CD4-positive, alpha-beta memory T cell (primary cell): ENCODE measurements at regions of chr18 and their contacts with region 1.

Region 1: DNA sequence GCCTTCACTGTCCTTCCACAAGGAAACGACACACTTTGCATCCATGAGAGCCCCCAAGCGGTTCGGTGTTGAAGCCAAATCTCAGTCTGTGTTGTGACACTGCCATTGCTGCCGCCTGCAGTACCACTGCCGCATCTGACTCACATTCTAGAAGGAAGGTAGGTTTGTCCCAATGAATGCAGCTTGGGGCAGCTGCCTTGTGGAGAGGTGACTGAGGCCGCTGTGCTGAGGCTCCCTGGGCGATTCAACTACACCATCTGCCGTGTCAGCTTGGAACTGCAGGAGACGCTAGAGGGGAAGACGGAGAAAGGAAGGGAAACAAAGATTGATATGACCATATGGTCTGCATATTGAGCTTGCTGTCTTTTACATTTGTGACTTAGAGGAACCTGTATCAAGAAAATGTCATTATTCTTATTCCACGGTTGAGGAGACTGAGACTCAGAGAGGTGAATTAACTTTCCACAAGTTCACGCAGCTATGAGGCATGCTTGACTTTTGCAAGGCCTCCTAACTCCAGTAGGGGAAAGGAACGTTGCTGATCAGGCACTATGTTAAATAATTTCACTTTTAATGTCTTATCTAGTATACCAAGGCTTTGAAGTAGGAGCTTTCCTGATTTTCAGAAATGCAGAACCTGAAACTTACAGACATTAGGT is 43.5 kb upstream of the LMAN1 start:
- DNase-seq: peak; percentile 59 to 63 (median 62)
- H3K4me3 ChIP-seq: no peak overlapping the region
- H3K4me3 Mint-ChIP-seq: no peak overlapping the region
- H3K27ac ChIP-seq: no peak overlapping the region
- H3K27ac Mint-ChIP-seq: no peak overlapping the region
- H3K4me1 ChIP-seq: no peaks in the 10 kb centered on the region
- H3K4me1 Mint-ChIP-seq: peaks cover 0 to 2% (median under 1%) of the 10 kb centered on the region in 4 donors
- H3K27me3 ChIP-seq: no peaks in the 10 kb centered on the region
- H3K27me3 Mint-ChIP-seq: peaks cover 0 to 1% of the 10 kb centered on the region in 2 donors

Region 2: DNA sequence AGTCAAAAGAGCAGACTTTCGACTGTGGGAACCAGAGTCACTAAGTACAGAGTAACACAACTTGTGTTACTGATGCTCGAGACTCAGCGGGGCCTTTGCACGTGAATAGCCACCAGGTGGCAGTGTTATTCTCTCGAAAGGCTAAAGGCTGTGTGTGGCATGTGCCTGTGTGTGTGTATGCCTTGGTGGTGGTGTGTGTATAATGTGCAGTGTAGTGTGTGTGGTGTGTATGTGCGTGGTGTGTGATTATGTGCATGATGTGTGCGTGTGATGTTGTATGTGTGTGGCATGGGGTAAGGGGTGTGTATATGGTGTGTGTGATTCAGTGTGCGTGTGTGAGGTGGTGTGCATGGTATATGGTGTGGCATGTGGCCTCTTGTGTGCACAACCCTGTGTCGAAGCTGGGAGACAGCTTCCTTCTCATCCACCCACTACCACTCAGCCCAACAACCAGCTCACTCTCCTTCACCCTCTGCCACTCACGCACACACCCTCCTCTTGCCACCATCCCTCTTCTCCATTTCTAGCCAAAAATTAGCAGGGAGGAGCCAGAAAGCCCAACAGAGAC is 620.9 kb before region 1 on chr18:
- CTCF ChIA-PET with region 1: interaction called, 3 read pairs
- POLR2A ChIA-PET with region 1: no interaction called
- intact Hi-C with region 1: loop called (anchors 5 kb)
- DNase-seq: peak; percentile 57 to 63 (median 62)
- H3K4me3 ChIP-seq: no peak overlapping the region
- H3K4me3 Mint-ChIP-seq: no peak overlapping the region
- H3K27ac ChIP-seq: no peak overlapping the region
- H3K27ac Mint-ChIP-seq: no peak overlapping the region
- H3K4me1 ChIP-seq: no peaks in the 10 kb centered on the region
- H3K4me1 Mint-ChIP-seq: peaks cover 0 to 6% (median 3%) of the 10 kb centered on the region in 4 donors
- H3K27me3 ChIP-seq: no peaks in the 10 kb centered on the region
- H3K27me3 Mint-ChIP-seq: peaks cover 5 to 12% of the 10 kb centered on the region in 2 donors

Region 3: DNA sequence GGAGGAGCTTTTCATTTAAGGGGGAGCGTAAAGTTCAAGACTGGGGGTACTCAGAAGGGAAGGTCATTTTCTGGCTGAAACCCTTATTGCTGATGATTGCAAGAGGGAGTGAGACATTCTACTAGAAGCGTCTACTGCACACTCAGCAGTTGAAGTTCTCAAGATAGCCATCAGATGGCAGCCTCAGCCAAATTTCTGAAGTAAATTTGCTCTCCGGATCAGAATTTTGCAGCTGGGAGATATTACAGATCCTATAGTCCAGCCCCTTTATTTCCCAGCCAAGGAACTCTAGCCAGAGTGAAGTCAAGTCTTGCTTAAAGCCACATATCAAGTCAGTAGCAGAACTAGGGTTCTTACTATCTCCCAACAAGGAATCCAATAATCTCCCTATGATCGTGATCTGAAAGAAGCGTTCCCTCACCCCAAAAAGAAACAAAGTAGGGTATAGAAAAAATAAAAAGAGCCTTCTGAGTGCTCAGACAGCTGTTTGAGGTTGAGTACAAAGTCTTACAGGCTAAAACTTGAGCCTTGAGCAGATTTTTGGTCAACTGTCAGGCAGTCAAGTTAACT is 153.3 kb before region 1 on chr18:
- CTCF ChIA-PET with region 1: interaction called, 40 read pairs
- POLR2A ChIA-PET with region 1: no interaction called
- intact Hi-C with region 1: loop called (anchors 5 kb)
- DNase-seq: peak in 2 of 5 donors; percentile 11 to 18
- H3K4me3 ChIP-seq: no peak overlapping the region
- H3K4me3 Mint-ChIP-seq: no peak overlapping the region
- H3K27ac ChIP-seq: no peak overlapping the region
- H3K27ac Mint-ChIP-seq: no peak overlapping the region
- H3K4me1 ChIP-seq: no peaks in the 10 kb centered on the region
- H3K4me1 Mint-ChIP-seq: no peaks in the 10 kb centered on the region
- H3K27me3 ChIP-seq: no peaks in the 10 kb centered on the region
- H3K27me3 Mint-ChIP-seq: peaks cover 29 to 35% of the 10 kb centered on the region in 2 donors

Region 4: DNA sequence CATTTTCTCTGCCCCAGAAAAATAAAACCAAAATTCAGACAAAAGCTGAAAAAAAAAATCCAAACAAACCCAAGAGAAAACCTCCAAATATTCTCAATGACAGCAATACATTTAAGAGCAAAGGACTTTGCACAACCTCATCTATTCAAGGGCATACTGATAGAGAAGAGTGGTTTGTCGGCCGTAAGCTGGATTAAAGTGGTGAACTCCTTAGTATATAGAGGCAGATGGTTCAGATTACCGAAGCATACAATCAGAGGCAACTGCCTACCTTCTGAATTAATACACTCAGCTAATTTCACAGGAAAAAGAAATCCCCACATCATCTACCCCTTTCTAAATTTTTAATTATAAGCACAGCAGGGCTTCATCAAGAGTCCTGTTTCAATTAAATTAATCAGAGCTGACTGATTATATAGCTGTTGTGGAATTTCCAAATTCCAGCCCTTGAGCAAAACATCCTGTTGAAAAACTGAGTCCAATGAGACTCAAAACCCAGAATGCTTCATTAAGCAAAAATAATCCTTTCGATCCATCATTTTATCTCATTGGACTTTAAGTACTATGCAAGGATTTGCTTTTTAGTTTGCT is 84.0 kb before region 1 on chr18 and contains the start of gene CPLX4:
- CTCF ChIA-PET with region 1: interaction called, 262 read pairs
- POLR2A ChIA-PET with region 1: no interaction called
- intact Hi-C with region 1: no loop called
- DNase-seq: no peak
- H3K4me3 ChIP-seq: no peak within 1 kb of the TSS
- H3K4me3 Mint-ChIP-seq: no peak within 1 kb of the TSS
- H3K27ac ChIP-seq: no peak within 1 kb of the TSS
- H3K27ac Mint-ChIP-seq: no peak within 1 kb of the TSS
- H3K4me1 ChIP-seq: no peaks in the 10 kb centered on the region
- H3K4me1 Mint-ChIP-seq: no peaks in the 10 kb centered on the region
- H3K27me3 ChIP-seq: no peaks in the 10 kb centered on the region
- H3K27me3 Mint-ChIP-seq: peaks cover 1 to 5% of the 10 kb centered on the region in 2 donors
- total RNA-seq, gene CPLX4: not detected

Region 5: GRCh38 chr18:59383851-59384250 is 18.7 kb before region 1 on chr18:
- CTCF ChIA-PET with region 1: interaction called, 11 read pairs
- POLR2A ChIA-PET with region 1: no interaction called
- intact Hi-C with region 1: no loop called
- DNase-seq: no peak
- H3K4me3 ChIP-seq: no peak overlapping the region
- H3K4me3 Mint-ChIP-seq: no peak overlapping the region
- H3K27ac ChIP-seq: no peak overlapping the region
- H3K27ac Mint-ChIP-seq: no peak overlapping the region
- H3K4me1 ChIP-seq: no peaks in the 10 kb centered on the region
- H3K4me1 Mint-ChIP-seq: no peaks in the 10 kb centered on the region
- H3K27me3 ChIP-seq: no peaks in the 10 kb centered on the region
- H3K27me3 Mint-ChIP-seq: peaks cover 12 to 16% of the 10 kb centered on the region in 2 donors

Region 6: GRCh38 chr18:59459369-59460079 is 57.0 kb after region 1 on chr18:
- CTCF ChIA-PET with region 1: no interaction called
- POLR2A ChIA-PET with region 1: no interaction called
- intact Hi-C with region 1: no loop called
- DNase-seq: no peak
- H3K4me3 ChIP-seq: no peak overlapping the region
- H3K4me3 Mint-ChIP-seq: no peak overlapping the region
- H3K27ac ChIP-seq: no peak overlapping the region
- H3K27ac Mint-ChIP-seq: no peak overlapping the region
- H3K4me1 ChIP-seq: no peaks in the 10 kb centered on the region
- H3K4me1 Mint-ChIP-seq: no peaks in the 10 kb centered on the region
- H3K27me3 ChIP-seq: no peaks in the 10 kb centered on the region
- H3K27me3 Mint-ChIP-seq: peaks cover 4 to 8% of the 10 kb centered on the region in 2 donors